CD4-positive, alpha-beta T cell (primary cell): ENCODE measurements at regions of chr17 and their contacts with region 1.

Region 1: DNA sequence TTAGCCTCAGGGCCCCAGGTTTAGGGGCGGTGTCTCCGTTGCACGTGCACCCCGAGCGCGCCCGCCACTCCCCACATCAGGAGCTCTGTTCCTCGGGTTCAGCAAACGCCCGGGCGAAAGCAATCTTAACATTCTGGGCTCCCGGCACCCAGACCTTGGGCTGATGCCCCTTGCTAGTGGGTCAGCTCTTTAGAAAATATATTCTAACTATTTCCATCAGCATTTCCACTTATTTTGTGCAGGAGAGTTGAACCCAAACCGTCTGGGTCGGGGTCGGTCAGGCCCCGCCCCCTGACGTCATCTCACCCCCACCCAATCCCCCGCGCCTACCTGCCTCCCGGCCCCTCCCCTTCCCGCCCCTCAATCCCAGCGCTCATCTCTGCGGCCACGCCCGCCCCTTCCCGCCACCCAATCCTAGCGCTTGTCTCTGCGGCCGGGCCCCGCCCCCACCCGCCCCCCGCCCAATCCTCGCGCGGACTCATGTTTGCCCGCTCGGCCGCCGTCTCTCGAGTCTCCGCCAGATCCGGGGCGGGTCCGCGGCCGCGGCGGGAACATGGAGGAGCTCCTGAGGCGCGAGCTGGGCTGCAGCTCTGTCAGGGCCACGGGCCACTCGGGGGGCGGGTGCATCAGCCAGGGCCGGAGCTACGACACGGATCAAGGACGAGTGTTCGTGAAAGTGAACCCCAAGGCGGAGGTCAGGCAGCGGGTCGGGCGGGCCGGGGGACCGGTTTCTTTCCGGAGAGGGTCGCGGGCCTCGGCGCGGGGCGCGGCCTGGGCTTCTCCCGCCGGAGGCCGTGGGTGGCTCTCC is at the start of gene FN3KRP:
- DNase-seq: peak; percentile 69 to 99 (median 87)
- ATAC-seq: peak; percentile 87
- H3K4me3 ChIP-seq: peak within 1 kb of the TSS; percentile 72
- H3K4me3 Mint-ChIP-seq: peak within 1 kb of the TSS; percentile 97
- H3K27ac ChIP-seq: peak within 1 kb of the TSS; percentile 5 to 50
- H3K27ac Mint-ChIP-seq: peak within 1 kb of the TSS; percentile 56
- H3K4me1 ChIP-seq: peaks cover 24% of the 10 kb centered on the region
- H3K4me1 Mint-ChIP-seq: peaks cover 31% of the 10 kb centered on the region
- H3K27me3 ChIP-seq: no peaks in the 10 kb centered on the region
- H3K27me3 Mint-ChIP-seq: no peaks in the 10 kb centered on the region
- CTCF ChIP-seq: no peak
- total RNA-seq, gene FN3KRP: 30.6 to 31.2 TPM

Region 2: GRCh38 chr17:82751571-82752370 is 35.4 kb after region 1 on chr17 and contains the start of gene TBCD:
- CTCF ChIA-PET with region 1: no interaction called
- POLR2A ChIA-PET with region 1: interaction called, 6 read pairs
- intact Hi-C with region 1: loop called (anchors 1 to 5 kb)
- DNase-seq: peak; percentile 77 to 96 (median 89)
- ATAC-seq: peak; percentile 71
- H3K4me3 ChIP-seq: peak within 1 kb of the TSS; percentile 63
- H3K4me3 Mint-ChIP-seq: peak within 1 kb of the TSS; percentile 89
- H3K27ac ChIP-seq: peak within 1 kb of the TSS in 1 of 2 donors; percentile 41
- H3K27ac Mint-ChIP-seq: no peak within 1 kb of the TSS
- H3K4me1 ChIP-seq: peaks cover 32% of the 10 kb centered on the region
- H3K4me1 Mint-ChIP-seq: peaks cover 25% of the 10 kb centered on the region
- H3K27me3 ChIP-seq: no peaks in the 10 kb centered on the region
- H3K27me3 Mint-ChIP-seq: no peaks in the 10 kb centered on the region
- CTCF ChIP-seq: no peak
- total RNA-seq, gene TBCD: 74.6 to 80.3 TPM

Region 3: DNA sequence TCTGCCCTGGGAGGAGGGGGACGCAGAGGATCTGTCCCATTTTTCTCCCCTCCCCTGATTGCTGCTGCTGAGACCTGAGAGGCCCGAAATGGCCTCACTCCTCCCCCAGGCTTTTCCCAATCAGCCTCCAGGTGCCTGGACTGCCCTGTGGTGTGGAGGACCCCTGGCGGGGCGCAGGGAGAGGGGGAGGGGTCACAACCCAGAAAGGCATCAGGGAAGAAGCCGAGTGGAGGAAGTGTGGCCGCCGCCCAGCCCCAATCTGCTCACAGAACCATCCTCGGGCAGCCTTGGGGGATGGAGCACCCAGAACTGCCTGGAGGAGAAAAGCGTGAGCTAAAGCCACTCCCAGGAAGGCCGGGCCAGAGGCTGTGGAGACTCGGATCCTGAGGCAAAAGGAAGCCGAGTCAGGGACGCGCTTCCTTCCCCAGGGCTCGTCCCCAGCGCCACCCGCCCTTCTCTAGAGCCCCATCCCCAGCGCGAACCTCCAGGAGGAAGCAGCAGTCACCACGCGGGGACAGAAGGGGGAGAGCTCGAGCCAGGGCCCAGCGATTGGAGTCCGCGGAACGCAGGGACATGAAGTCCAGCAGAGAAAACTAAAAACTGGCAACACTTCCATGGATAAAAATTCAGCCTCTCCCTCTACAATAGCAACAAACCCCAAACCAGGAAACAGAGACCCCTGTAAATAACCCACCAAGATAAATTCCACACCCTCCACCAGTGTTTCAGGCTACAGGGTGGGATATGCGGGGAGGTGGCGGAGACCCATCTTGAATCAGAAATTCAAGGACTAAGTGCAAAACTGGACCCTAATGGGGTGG is 246.7 kb after region 1 on chr17:
- CTCF ChIA-PET with region 1: no interaction called
- POLR2A ChIA-PET with region 1: no interaction called
- intact Hi-C with region 1: no loop called
- DNase-seq: peak in 12 of 14 experiments; percentile 20 to 68 (median 43)
- ATAC-seq: peak; percentile 86
- H3K4me3 ChIP-seq: no peak overlapping the region
- H3K4me3 Mint-ChIP-seq: peak overlapping the region; percentile 48
- H3K27ac ChIP-seq: no peak overlapping the region
- H3K27ac Mint-ChIP-seq: no peak overlapping the region
- H3K4me1 ChIP-seq: peaks cover 6% of the 10 kb centered on the region
- H3K4me1 Mint-ChIP-seq: peaks cover 7% of the 10 kb centered on the region
- H3K27me3 ChIP-seq: no peaks in the 10 kb centered on the region
- H3K27me3 Mint-ChIP-seq: no peaks in the 10 kb centered on the region
- CTCF ChIP-seq: peak; percentile 51